Activated CD4-positive, alpha-beta T cell treated with anti-CD3 and anti-CD28 coated beads for 36 hours (primary cell): ENCODE measurements at regions of chrX and their contacts with region 1.

Region 1: DNA sequence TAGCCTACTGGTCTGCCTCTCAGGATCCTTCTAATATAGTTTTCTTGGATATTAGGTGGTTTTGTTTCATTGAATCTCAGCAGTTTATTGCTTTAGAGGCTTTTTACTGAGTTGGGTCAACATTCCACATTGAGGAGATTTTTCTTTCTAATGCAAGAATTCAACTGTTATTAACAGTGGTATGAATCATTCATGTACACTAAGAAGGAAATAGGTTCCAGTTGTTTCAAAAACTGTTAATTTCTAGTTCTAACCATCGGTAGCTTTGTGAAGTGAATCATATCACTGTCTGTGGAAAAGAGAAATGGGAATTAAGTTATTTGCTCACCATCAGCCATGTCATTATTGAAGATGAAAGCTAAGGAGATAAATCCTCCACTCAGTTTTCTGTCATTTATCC is 331.5 kb downstream of the RPA4 start:
- DNase-seq: no peak
- ATAC-seq: no peak
- H3K4me3 Mint-ChIP-seq: no peak overlapping the region
- H3K27ac Mint-ChIP-seq: no peak overlapping the region
- H3K4me1 Mint-ChIP-seq: peaks cover 3% of the 10 kb centered on the region
- H3K27me3 Mint-ChIP-seq: no peaks in the 10 kb centered on the region

Region 2: DNA sequence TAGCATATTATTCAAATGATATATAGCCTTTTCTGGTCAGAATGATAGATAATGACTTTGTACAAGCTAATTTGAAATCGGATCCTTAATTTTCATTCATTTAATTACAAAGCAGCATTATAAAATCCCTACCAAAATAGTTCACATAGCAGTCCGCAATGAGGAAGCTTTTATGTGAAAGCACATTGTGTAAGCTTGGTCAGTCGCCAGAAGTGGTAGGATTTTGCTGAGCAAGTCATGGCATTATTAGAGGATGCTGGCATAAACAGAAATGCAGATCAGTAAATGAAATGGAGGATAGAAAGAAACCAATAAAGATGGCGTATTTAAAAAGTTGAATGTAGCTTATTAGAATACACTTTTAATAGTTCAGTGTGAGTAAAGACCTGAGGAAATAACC is 623.8 kb before region 1 on chrX:
- CTCF ChIA-PET with region 1: no interaction called
- POLR2A ChIA-PET with region 1: no interaction called
- intact Hi-C with region 1: no loop called
- DNase-seq: no peak
- ATAC-seq: no peak
- H3K4me3 Mint-ChIP-seq: no peak overlapping the region
- H3K27ac Mint-ChIP-seq: no peak overlapping the region
- H3K4me1 Mint-ChIP-seq: no peaks in the 10 kb centered on the region
- H3K27me3 Mint-ChIP-seq: no peaks in the 10 kb centered on the region

Region 3: DNA sequence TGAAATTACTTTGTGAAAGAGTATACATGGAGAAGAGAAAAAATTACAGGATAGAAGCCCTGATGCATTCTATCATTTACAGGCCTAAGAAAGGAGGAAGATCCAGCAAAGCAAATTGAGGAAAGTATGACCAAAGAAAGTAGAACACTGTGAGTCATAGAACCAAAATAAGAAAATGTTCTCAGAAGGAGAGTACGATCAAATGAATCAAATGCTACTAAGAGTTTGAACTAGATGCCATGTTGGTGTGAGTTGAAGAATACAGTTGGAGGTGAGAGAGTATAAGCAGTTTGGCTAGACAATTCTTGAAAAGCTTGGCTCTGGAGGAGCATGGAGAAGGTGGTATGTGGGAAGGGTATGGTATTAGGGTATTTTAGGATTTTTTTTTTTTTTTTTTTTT is 169.7 kb before region 1 on chrX:
- CTCF ChIA-PET with region 1: no interaction called
- POLR2A ChIA-PET with region 1: no interaction called
- intact Hi-C with region 1: loop called (anchors 2 to 10 kb)
- DNase-seq: no peak
- ATAC-seq: peak; percentile 39
- H3K4me3 Mint-ChIP-seq: no peak overlapping the region
- H3K27ac Mint-ChIP-seq: no peak overlapping the region
- H3K4me1 Mint-ChIP-seq: peaks cover 3% of the 10 kb centered on the region
- H3K27me3 Mint-ChIP-seq: no peaks in the 10 kb centered on the region

Region 4: DNA sequence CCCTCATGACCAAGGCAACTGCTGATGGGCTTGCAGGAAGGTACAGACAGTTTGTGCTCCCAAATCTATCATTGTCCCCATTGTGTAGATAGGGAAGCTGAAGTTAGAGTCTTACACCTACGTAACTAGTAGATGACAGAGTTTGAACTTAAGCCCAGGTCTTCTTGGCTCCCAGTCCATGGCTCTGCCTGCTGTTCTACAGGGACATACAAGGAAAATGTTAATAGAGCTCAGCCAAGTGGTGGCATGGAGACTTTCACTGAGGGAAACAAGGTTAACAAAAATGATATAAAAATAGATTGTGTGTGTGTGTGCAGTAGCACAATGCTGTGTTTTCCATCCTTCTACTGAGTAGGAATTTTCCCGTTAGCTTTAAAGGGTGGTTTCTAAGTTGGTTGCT is 605.0 kb after region 1 on chrX:
- CTCF ChIA-PET with region 1: no interaction called
- POLR2A ChIA-PET with region 1: no interaction called
- intact Hi-C with region 1: no loop called
- DNase-seq: no peak
- ATAC-seq: no peak
- H3K4me3 Mint-ChIP-seq: no peak overlapping the region
- H3K27ac Mint-ChIP-seq: no peak overlapping the region
- H3K4me1 Mint-ChIP-seq: no peaks in the 10 kb centered on the region
- H3K27me3 Mint-ChIP-seq: peaks cover 4% of the 10 kb centered on the region

Region 5: DNA sequence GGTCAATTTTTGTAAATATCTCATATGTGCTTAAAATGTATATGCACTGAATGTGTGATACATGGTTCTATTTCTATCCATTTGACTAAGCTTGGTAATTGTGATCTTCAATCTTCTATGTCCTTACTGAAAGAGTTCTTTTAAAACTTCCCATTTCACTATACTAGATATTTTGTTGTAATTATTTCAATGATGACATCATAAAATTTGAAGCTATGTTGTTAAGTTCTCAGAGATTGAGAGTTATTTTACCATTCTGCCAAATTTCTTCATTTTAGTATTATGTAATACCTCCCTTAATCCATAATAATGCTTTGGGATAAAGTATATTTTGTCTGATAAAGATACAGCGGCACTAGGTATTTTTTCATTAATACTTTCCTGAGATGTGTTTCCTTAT is 975.8 kb after region 1 on chrX:
- CTCF ChIA-PET with region 1: no interaction called
- POLR2A ChIA-PET with region 1: no interaction called
- intact Hi-C with region 1: no loop called
- DNase-seq: no peak
- ATAC-seq: no peak
- H3K4me3 Mint-ChIP-seq: no peak overlapping the region
- H3K27ac Mint-ChIP-seq: no peak overlapping the region
- H3K4me1 Mint-ChIP-seq: no peaks in the 10 kb centered on the region
- H3K27me3 Mint-ChIP-seq: no peaks in the 10 kb centered on the region